Activated T-helper 2 cell treated with anti-CD3 and anti-CD28 coated beads, Interferon-gamma antibody, Interleukin-2, Interleukin-4, amounts not matched to agents 10 μg/mL and 5 μg/mL and 100 μg/mL, durations not matched to agents 14 hours and 24 hours and 36 hours (primary cell): ENCODE measurements at regions of chr17 and their contacts with region 1.

Region 1: DNA sequence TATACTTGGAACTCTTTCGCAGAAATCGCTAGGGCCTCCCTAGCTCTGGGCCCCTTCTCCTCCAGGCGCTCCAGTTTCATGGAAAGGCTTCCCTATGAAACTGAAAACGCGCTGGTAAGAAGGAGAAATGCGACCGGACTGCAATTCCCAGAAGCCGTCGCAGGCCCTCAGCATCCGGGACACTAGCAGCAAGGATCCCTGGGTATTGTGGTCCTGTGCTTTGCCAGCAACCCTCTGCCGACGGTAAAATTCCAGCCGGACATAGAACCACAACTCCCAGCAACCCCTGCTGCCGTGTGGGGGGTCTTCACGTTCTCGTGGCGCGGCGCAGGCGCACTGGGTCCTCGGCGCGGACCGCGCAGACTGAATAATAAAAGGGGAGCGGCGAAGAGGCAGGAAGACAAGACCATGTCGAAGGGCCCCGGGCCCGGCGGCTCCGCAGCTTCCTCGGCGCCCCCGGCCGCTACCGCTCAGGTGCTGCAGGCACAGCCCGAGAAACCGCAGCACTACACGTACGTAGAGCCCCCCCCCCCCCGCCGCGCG is at the start of gene UNK:
- DNase-seq: peak; percentile 96
- H3K4me3 Mint-ChIP-seq: peak within 1 kb of the TSS; percentile 88
- H3K27ac Mint-ChIP-seq: peak within 1 kb of the TSS; percentile 100
- H3K4me1 Mint-ChIP-seq: peaks cover 38% of the 10 kb centered on the region
- H3K27me3 Mint-ChIP-seq: no peaks in the 10 kb centered on the region
- total RNA-seq, gene UNK: 26.8 and 30.1 TPM in 2 replicates

Region 2: GRCh38 chr17:75830164-75830929 is 45.8 kb after region 1 on chr17:
- intact Hi-C with region 1: no loop called
- DNase-seq: no peak
- H3K4me3 Mint-ChIP-seq: no peak overlapping the region
- H3K27ac Mint-ChIP-seq: no peak overlapping the region
- H3K4me1 Mint-ChIP-seq: peaks cover 28% of the 10 kb centered on the region
- H3K27me3 Mint-ChIP-seq: no peaks in the 10 kb centered on the region

Region 3: DNA sequence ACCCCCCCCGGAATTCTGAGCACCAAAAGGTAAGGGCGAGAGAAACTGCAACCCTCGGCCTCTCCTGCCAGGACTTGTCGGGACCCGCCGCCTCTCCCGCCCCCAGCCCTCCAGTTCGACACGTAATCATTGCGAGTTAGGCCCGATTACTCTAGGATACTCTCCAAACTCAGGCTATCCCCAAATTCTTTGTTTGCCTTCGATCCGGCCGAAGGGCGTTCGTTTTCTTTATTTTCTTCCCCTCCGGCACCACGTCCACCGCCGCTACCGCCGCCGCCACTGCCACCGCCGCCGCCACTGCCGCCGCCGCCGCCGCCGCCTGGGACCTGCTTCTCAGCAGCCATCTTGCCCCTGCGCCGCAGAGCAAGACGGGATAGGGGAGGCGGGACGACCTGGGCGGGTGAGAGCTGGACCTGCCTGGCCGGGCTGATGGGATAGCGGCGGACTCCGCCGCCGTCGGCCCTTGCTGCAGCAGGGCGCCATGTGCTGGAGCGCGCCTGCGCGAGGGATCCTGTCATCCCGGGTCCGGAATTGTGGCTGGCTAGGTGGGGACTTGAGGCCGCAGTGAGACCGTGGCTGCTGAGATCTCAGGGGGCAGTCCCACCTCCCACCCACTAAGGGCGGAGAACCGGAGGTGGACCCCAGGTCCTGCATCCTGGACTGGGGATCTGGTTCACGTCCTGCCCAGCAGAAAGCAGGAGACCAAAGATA is 287.8 kb after region 1 on chr17 and contains the start of gene SRP68:
- intact Hi-C with region 1: loop called (anchors 10 kb)
- DNase-seq: peak; percentile 82
- H3K4me3 Mint-ChIP-seq: peak within 1 kb of the TSS; percentile 99
- H3K27ac Mint-ChIP-seq: peak within 1 kb of the TSS; percentile 100
- H3K4me1 Mint-ChIP-seq: peaks cover 26% of the 10 kb centered on the region
- H3K27me3 Mint-ChIP-seq: peaks cover 34% of the 10 kb centered on the region
- total RNA-seq, gene SRP68: 188 and 194 TPM in 2 replicates

Region 4: GRCh38 chr17:76264755-76265596 is 480.4 kb after region 1 on chr17 and contains the start of gene UBALD2:
- intact Hi-C with region 1: loop called (anchors 5 kb)
- DNase-seq: peak; percentile 100
- H3K4me3 Mint-ChIP-seq: peak within 1 kb of the TSS; percentile 91
- H3K27ac Mint-ChIP-seq: peak within 1 kb of the TSS; percentile 96
- H3K4me1 Mint-ChIP-seq: peaks cover 55% of the 10 kb centered on the region
- H3K27me3 Mint-ChIP-seq: no peaks in the 10 kb centered on the region
- total RNA-seq, gene UBALD2: 204 and 212 TPM in 2 replicates